ENCODE measurements at regions of chr22 and their contacts with region 1.

Region 1: GRCh38 chr22:42662114-42663021 is 13.2 kb upstream of the CYB5R3 start:
- DNase-seq: peak; percentile 86
- H3K4me3 Mint-ChIP-seq: peak overlapping the region; percentile 62
- H3K27ac Mint-ChIP-seq: no peak overlapping the region
- H3K4me1 Mint-ChIP-seq: peaks cover 2% of the 10 kb centered on the region
- H3K27me3 Mint-ChIP-seq: no peaks in the 10 kb centered on the region

Region 2: GRCh38 chr22:42780070-42780540 is 117.7 kb after region 1 on chr22:
- CTCF ChIA-PET with region 1: interaction called, 5 read pairs
- intact Hi-C with region 1: loop called (anchors 2 kb)
- DNase-seq: peak; percentile 64
- H3K4me3 Mint-ChIP-seq: no peak overlapping the region
- H3K27ac Mint-ChIP-seq: no peak overlapping the region
- H3K4me1 Mint-ChIP-seq: no peaks in the 10 kb centered on the region
- H3K27me3 Mint-ChIP-seq: no peaks in the 10 kb centered on the region

Region 3: DNA sequence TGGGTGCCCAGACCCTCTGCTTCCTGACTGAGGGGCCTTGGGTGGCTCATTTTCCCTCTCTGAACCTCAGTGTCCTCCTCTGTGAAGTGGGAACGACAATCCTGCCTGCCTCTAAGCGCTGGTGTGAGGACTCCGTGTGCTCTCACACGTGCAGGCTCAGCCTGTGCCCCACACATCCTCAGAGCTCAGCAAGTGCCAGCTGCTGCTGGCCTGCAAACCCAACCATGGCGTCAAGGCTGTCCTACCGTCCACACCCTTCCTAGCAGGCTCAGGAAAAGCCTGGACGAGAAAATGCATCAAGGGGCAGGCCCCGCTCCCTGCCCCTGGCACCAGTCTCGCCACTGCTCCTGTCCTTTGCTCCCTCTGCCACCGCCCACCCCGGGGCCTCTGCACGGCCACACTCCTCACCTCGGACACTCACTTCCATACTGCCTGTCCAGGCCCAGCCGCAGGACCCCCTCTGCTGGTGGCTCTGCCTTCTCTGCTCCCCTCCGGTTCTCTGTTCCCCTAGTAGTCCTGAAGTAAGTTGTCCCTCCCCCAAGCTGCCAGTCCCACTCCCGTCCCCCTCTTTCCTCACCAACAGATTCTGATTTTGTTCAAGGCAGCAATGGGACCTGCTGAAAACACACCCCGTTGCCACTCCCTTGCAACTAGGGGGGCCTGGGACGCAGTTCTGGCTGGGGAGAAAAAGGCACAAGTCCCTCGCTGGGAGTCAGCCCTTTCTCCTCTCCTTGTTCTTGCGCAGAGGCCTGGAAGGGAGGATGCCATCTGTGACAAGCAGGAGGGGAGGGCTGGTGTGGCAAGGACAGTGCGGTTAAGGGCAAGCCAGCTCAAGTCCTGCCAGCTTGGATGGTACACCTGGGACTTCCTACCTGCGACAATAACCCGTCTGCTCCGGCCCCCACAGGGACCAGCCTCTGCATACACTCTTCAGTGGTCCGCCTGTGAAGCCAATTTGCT is 132.5 kb after region 1 on chr22:
- CTCF ChIA-PET with region 1: no interaction called
- intact Hi-C with region 1: no loop called
- DNase-seq: no peak
- H3K4me3 Mint-ChIP-seq: no peak overlapping the region
- H3K27ac Mint-ChIP-seq: no peak overlapping the region
- H3K4me1 Mint-ChIP-seq: no peaks in the 10 kb centered on the region
- H3K27me3 Mint-ChIP-seq: no peaks in the 10 kb centered on the region

Region 4: DNA sequence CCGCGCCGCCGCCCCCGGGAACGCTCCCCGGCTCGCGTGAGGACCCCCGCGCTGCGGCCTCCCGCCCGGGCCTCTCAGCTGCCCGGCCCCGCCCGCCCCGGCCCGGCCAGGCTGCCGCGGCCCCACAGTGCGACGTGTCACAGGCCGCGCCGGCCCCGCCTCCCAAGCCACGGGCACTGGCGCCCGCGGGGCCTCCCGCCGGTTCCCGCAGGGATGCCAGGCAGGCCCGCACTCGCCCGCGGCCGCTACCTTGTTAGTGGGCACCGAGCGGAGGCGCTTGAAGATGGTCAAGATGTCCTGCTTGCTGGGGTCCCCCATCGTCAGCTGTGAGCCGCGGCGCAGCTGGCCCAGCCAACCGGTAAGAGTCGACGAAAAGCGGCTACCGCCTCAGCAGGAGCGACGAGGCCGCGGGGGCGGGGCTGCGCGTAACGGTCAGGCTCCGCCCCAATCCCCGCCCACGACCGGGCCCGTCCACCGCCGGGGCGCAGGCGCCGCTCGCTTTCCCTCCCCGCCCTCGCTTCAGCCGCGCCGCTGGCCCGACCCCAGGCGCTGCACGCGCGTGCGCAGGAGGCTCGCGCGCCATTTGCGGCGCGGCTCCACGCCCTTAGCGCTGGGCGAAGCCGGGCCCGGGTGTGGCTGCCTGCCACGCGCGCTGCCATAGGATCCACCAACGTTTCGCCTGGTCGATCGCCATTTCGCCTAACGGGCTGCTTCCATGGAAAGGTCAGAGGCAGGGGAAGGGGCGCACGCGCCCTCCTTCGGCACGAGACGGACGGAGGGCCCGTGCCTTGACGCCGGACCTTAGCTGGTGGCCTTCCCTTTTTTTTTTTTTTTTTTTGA is 194.7 kb after region 1 on chr22 and contains the start of gene ARFGAP3:
- CTCF ChIA-PET with region 1: interaction called, 4 read pairs
- intact Hi-C with region 1: loop called (anchors 2 kb)
- DNase-seq: peak; percentile 94
- H3K4me3 Mint-ChIP-seq: peak within 1 kb of the TSS; percentile 81
- H3K27ac Mint-ChIP-seq: peak within 1 kb of the TSS; percentile 66
- H3K4me1 Mint-ChIP-seq: peaks cover 6% of the 10 kb centered on the region
- H3K27me3 Mint-ChIP-seq: no peaks in the 10 kb centered on the region
- total RNA-seq, gene ARFGAP3: 25.6 to 28.6 TPM